HEK293T (cell line): ENCODE measurements at regions of chr12 and their contacts with region 1.

Region 1: GRCh38 chr12:112012775-112013600 is at the starts of genes ERP29 and TMEM116:
- DNase-seq: peak; percentile 99

Region 2: GRCh38 chr12:111943929-111944328 is 69.1 kb before region 1 on chr12:
- CTCF ChIA-PET with region 1: interaction called, 6 read pairs
- POLR2A ChIA-PET with region 1: interaction called, 17 read pairs
- DNase-seq: no peak

Region 3: DNA sequence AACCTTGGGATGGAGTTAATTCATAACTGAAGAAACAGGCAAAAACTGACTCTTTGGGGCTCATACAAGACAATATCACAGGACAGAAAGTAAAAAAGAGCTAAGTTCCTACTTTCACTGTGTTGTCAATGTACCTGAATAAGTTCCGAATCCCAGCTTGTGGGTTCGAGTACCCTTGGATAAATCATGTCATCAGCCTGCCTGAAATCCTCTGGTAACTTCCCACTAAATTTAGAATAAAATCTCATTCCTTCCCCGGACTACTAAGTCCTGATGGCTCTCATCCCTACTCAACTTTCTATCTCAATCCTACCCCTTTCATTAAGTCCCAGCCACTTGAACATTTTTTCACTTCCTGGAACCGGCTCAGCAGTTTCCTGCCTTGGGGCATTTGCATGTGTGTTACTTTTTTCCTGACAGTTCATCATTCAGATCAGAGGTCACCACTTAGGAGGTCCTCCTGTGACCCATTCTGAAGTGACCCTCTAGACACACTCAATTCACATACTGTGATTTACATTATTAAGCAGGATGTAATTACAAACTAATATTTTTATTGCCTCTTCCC is 12.9 kb after region 1 on chr12:
- CTCF ChIA-PET with region 1: no interaction called
- POLR2A ChIA-PET with region 1: interaction called, 23 read pairs
- DNase-seq: no peak